AG04449 (cell line): ENCODE measurements at regions of chr22 and their contacts with region 1.

Region 1: GRCh38 chr22:32796865-32797573 is 4.5 kb upstream of the TIMP3 start:
- DNase-seq: no peak
- H3K4me3 ChIP-seq: peak overlapping the region; percentile 27
- CTCF ChIP-seq: peak; percentile 97

Region 2: GRCh38 chr22:31148953-31149627 is 1647.9 kb before region 1 on chr22:
- CTCF ChIA-PET with region 1: no interaction called
- POLR2A ChIA-PET with region 1: no interaction called
- DNase-seq: no peak
- H3K4me3 ChIP-seq: no peak overlapping the region
- CTCF ChIP-seq: peak; percentile 97

Region 3: DNA sequence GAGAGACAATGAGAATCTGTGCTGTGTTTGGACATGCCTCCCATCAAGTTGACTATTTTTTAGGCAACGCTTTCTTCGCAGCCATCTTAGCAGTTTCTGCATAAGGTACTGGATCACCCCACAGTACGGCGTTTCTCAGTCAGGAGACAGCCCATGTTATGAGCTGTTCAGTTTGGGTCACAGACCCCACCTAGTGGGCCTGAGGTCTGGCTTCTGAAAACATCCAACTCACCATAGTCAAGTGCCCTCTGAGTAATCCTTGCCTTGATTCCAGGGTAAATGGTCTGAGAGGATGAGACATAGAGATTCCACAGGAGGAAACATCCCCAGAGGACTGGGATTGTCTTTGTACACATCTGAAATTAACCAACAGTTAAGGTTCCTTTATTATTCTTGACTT is 340.0 kb before region 1 on chr22:
- CTCF ChIA-PET with region 1: no interaction called
- POLR2A ChIA-PET with region 1: no interaction called
- DNase-seq: no peak
- H3K4me3 ChIP-seq: no peak overlapping the region
- CTCF ChIP-seq: no peak

Region 4: DNA sequence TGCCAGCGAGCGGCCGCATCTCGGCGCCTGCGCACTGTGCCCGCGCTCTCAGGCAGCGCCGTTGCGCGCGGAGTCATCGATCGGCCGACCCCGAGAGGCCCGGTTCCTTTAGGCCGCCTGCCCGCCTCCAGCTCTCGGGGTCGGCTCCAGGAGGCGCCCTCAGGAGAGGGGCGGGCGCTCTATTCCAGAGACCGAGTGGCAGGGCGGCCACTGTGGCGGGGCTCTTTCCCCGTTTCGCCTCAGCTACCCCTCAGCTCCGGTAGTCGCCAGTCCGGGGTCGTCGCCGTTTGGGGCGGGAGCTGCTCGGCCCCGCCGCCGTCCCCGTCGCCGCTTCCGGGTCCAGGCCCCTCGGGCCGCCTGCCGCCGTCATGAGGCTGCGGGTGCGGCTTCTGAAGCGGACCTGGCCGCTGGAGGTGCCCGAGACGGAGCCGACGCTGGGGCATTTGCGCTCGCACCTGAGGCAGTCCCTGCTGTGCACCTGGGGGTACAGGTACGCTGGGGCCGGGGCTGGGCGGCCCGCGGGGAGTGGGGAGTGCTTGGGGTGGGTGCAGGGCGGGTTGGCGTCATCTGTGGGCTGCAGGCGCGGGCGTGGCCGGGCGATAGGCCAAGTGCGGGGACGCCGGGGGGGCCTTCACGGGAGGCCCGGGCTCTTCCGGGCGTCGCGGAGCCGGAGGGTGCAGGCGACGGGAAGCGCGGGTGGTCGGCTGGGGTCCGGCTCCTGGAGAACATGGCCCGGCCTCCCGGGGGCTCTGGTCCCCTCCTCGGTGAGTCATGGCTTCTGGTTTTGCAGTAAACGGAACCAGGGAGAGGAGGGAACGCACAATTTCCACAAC is 322.2 kb before region 1 on chr22 and contains the start of gene FBXO7:
- CTCF ChIA-PET with region 1: interaction called, 13 read pairs
- POLR2A ChIA-PET with region 1: interaction called, 17 read pairs
- DNase-seq: peak; percentile 36
- H3K4me3 ChIP-seq: peak within 1 kb of the TSS; percentile 89
- CTCF ChIP-seq: peak; percentile 75

Region 5: GRCh38 chr22:32622004-32622743 is 174.8 kb before region 1 on chr22:
- CTCF ChIA-PET with region 1: interaction called, 56 read pairs
- POLR2A ChIA-PET with region 1: interaction called, 16 read pairs
- DNase-seq: peak; percentile 49
- H3K4me3 ChIP-seq: no peak overlapping the region
- CTCF ChIP-seq: no peak

Region 6: GRCh38 chr22:32660292-32660691 is 136.7 kb before region 1 on chr22:
- CTCF ChIA-PET with region 1: interaction called, 578 read pairs
- POLR2A ChIA-PET with region 1: interaction called, 60 read pairs
- DNase-seq: no peak
- H3K4me3 ChIP-seq: no peak overlapping the region
- CTCF ChIP-seq: peak; percentile 80

Region 7: GRCh38 chr22:32708830-32709229 is 88.2 kb before region 1 on chr22:
- CTCF ChIA-PET with region 1: interaction called, 14 read pairs
- POLR2A ChIA-PET with region 1: interaction called, 7 read pairs
- DNase-seq: no peak
- H3K4me3 ChIP-seq: no peak overlapping the region
- CTCF ChIP-seq: no peak

Region 8: GRCh38 chr22:32823024-32823730 is 26.2 kb after region 1 on chr22:
- CTCF ChIA-PET with region 1: interaction called, 38 read pairs
- POLR2A ChIA-PET with region 1: interaction called, 6 read pairs
- DNase-seq: no peak
- H3K4me3 ChIP-seq: no peak overlapping the region
- CTCF ChIP-seq: peak; percentile 45

Region 9: GRCh38 chr22:32862936-32863661 is 66.1 kb after region 1 on chr22:
- CTCF ChIA-PET with region 1: no interaction called
- POLR2A ChIA-PET with region 1: no interaction called
- DNase-seq: no peak
- H3K4me3 ChIP-seq: no peak overlapping the region
- CTCF ChIP-seq: no peak

Region 10: DNA sequence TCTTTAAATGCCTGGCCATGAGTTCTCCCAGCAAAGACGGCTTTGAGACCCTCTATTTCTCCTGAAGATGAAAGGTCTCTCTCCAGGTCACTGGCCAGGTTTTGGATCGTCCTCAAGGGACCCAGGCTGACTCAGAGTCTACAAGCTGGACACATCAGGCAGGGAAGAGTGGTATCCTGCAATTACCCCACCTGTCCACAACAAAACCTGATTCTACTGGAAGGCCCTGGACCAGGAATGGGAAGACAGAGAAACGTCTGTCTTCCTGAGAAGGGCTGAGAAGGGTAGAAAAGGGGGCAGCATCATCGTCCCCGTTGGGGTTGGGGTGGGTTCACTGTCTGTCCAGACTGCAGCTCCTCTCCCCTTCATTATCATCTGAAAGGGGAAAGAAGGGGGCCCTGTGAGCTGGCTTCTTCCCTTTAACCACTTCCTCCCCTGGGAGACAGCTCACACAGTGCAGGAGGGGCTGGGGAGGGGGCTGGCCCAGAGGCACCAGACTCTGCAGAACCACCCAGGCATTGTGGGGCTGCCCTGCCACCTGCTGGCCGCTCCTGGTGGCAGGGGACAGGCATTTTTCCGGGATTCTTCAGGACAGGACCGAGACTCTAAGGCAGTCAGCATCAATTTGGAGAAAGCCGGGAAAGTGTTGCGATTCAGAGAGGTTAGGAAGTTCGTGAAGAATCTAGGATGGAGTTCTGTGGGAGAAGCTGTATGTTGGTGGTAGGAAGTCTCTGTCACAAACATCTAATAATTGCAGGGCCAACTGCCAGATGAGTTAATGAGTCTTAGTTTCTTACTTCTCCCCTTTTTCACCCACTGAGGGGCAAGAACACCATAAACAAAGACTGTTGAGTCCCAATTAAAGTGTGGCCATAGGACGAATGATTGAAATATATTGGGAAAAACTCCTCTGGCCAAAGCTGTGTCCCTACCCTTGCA is 203.6 kb after region 1 on chr22:
- CTCF ChIA-PET with region 1: interaction called, 14 read pairs
- POLR2A ChIA-PET with region 1: no interaction called
- DNase-seq: no peak
- H3K4me3 ChIP-seq: no peak overlapping the region
- CTCF ChIP-seq: peak; percentile 96